ENCODE measurements at regions of chr6 and their contacts with region 1.

Region 1: GRCh38 chr6:113047148-113047547 is 700.0 kb downstream of the RFPL4B start:
- DNase-seq: peak; percentile 79
- ATAC-seq: peak; percentile 90
- H3K4me3 ChIP-seq: no peak overlapping the region
- H3K27ac ChIP-seq: peak overlapping the region; percentile 83
- H3K4me1 ChIP-seq: peaks cover 44% of the 10 kb centered on the region
- H3K27me3 ChIP-seq: no peaks in the 10 kb centered on the region
- CTCF ChIP-seq: no peak

Region 2: DNA sequence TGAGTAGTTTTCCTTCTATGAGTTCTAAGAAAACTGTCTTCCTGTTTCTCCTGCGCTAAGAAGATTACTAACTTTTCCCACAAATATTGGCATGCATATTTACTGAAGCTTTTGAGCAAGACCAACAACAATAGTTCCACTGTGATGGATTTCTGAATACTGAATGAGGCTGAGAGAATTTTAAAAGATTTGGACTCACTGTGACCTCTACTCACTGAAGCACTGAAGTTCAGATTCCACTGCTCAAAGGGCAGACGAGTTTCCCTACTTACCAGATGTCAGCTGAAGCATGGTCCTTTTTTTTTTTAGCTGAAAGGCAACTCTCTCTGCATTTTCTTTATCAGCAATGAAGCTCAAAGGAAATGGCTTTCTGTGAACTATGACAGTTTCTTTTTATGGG is 18.5 kb after region 1 on chr6:
- CTCF ChIA-PET with region 1: no interaction called
- POLR2A ChIA-PET with region 1: no interaction called
- intact Hi-C with region 1: no loop called
- DNase-seq: no peak
- ATAC-seq: no peak; the same call in 1 of the 2 replicates
- H3K4me3 ChIP-seq: no peak overlapping the region
- H3K27ac ChIP-seq: no peak overlapping the region
- H3K4me1 ChIP-seq: peaks cover 25% of the 10 kb centered on the region
- H3K27me3 ChIP-seq: no peaks in the 10 kb centered on the region
- CTCF ChIP-seq: no peak

Region 3: GRCh38 chr6:113122060-113122459 is 74.9 kb after region 1 on chr6:
- CTCF ChIA-PET with region 1: no interaction called
- POLR2A ChIA-PET with region 1: no interaction called
- intact Hi-C with region 1: loop called (anchors 1 kb)
- DNase-seq: peak; percentile 88
- ATAC-seq: peak; percentile 61
- H3K4me3 ChIP-seq: peak overlapping the region; percentile 2; the same call in 1 of the 2 replicates
- H3K27ac ChIP-seq: peak overlapping the region; percentile 66
- H3K4me1 ChIP-seq: peaks cover 33% of the 10 kb centered on the region
- H3K27me3 ChIP-seq: no peaks in the 10 kb centered on the region
- CTCF ChIP-seq: peak; percentile 44; the same call in 1 of the 2 replicates

Region 4: DNA sequence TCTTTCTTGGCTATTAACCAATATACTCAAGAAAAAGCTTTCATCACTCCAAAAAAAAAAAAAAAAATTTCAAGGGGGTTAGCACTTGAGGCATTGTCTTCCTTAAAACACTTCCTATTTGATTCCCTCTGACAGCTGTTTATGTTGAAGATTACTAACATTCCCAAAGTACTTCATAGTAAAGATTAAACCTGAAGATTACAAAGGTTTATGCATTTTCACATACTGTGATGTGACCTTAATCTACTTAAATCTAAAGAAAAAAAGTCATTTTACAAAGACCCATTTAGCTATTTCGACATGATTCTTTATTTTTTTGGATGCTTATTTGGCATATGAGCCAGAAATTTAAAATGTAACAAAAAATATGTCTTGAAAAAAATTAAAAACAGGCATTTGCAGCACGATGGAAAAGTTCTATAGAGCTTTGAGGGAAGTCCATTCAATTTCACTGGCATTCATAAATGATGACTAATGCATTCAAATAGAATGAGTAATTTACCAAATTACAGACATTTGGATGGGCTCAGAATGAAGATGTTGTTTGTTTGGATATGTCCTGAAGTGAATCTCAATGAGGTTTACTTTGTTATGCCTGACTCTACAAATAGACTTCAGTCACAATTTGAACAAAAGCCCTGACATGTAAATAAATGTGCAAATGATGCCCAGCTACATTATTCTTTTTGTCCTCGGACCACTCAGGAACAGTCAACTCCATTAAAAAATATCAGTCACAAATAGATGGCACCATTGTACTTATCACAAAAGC is 135.4 kb after region 1 on chr6:
- CTCF ChIA-PET with region 1: no interaction called
- POLR2A ChIA-PET with region 1: no interaction called
- intact Hi-C with region 1: loop called (anchors 1 kb)
- DNase-seq: peak; percentile 85
- ATAC-seq: peak; percentile 87
- H3K4me3 ChIP-seq: peak overlapping the region; percentile 20; the same call in 1 of the 2 replicates
- H3K27ac ChIP-seq: peak overlapping the region; percentile 39; the same call in 1 of the 2 replicates
- H3K4me1 ChIP-seq: peaks cover 21% of the 10 kb centered on the region
- H3K27me3 ChIP-seq: no peaks in the 10 kb centered on the region
- CTCF ChIP-seq: no peak; the same call in 1 of the 2 replicates

Region 5: GRCh38 chr6:113359155-113360140 is 312.3 kb after region 1 on chr6:
- CTCF ChIA-PET with region 1: no interaction called
- POLR2A ChIA-PET with region 1: no interaction called
- intact Hi-C with region 1: loop called (anchors 10 kb)
- DNase-seq: peak; percentile 68
- ATAC-seq: peak; percentile 76
- H3K4me3 ChIP-seq: no peak overlapping the region
- H3K27ac ChIP-seq: peak overlapping the region; percentile 53
- H3K4me1 ChIP-seq: peaks cover 48% of the 10 kb centered on the region
- H3K27me3 ChIP-seq: no peaks in the 10 kb centered on the region
- CTCF ChIP-seq: no peak

Region 6: GRCh38 chr6:113630738-113631535 is 583.8 kb after region 1 on chr6:
- CTCF ChIA-PET with region 1: no interaction called
- POLR2A ChIA-PET with region 1: no interaction called
- intact Hi-C with region 1: no loop called
- DNase-seq: peak; percentile 16
- ATAC-seq: no peak
- H3K4me3 ChIP-seq: no peak overlapping the region
- H3K27ac ChIP-seq: peak overlapping the region; percentile 97
- H3K4me1 ChIP-seq: peaks cover 39% of the 10 kb centered on the region
- H3K27me3 ChIP-seq: no peaks in the 10 kb centered on the region
- CTCF ChIP-seq: no peak